ENCODE measurements at regions of chr17 and their contacts with region 1.

Region 1: GRCh38 chr17:39547713-39548478 is 59.8 kb downstream of the NEUROD2 start:
- DNase-seq: peak; percentile 84
- ATAC-seq: peak; percentile 81

Region 2: DNA sequence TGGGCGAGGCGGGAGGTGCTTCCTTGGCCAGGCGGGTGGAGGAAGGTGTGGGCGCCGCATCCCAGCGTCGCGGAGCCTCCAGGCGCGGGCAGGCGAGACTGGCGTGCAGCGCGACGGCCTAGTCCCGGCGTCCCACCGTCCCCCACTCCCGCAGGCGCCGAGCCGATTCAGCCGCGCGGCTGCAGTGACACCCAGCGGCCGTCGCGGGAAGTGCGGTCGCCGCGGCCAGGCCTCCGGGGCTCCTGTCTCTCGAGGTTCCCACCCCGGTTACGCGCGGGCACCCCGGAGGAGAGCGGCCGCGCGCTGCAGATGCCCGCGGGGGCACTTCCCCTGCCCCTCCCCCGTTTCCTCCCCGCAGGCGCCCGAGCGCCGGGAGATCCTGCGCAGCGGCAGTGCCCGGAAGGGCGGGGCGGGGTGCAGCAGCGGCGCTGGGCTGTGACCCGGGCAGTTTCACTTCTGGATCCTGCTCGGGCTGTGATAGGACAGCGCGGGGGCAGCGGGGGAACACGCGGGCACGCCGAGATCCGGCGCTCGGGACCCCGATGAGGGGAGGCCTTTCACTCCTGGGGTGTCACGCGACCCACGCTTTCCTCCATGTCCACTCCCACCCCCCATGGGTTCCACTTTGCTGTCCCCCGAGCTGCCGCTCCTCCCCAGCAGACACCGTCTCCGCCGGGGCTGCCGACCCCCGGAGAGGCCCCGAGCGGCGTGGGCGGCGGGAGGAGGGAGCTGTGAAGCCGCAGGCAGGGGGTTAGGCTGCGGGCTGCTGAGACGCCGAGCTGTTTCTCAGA is 206.5 kb after region 1 on chr17:
- intact Hi-C with region 1: loop called (anchors 10 kb)
- DNase-seq: peak; percentile 96
- ATAC-seq: peak; percentile 95